Transverse colon (tissue), 4 donors: ENCODE measurements at regions of chr3 and their contacts with region 1.

Region 1: GRCh38 chr3:57298041-57298440 is 5.6 kb upstream of the ASB14 start:
- DNase-seq: no peak
- H3K4me3 ChIP-seq: no peak overlapping the region
- H3K27ac ChIP-seq: no peak overlapping the region
- H3K4me1 ChIP-seq: no peaks in the 10 kb centered on the region
- H3K27me3 ChIP-seq: peaks cover 6% of the 10 kb centered on the region
- CTCF ChIP-seq: no peak
- EP300 ChIP-seq: no peak
- POLR2A ChIP-seq: no peak

Region 2: GRCh38 chr3:57314204-57314603 is 16.2 kb after region 1 on chr3:
- in situ Hi-C with region 1: no loop called
- intact Hi-C with region 1: loop called (anchors 1 kb)
- DNase-seq: no peak
- H3K4me3 ChIP-seq: no peak overlapping the region
- H3K27ac ChIP-seq: no peak overlapping the region
- H3K4me1 ChIP-seq: no peaks in the 10 kb centered on the region
- H3K27me3 ChIP-seq: peaks cover 14% of the 10 kb centered on the region
- CTCF ChIP-seq: no peak
- EP300 ChIP-seq: no peak
- POLR2A ChIP-seq: no peak